Colonic mucosa (tissue), 4 donors: ENCODE measurements at regions of chr3 and their contacts with region 1.

Region 1: GRCh38 chr3:149771652-149772271 is 19.5 kb upstream of the COMMD2 start:
- DNase-seq: peak; percentile 56
- H3K4me3 ChIP-seq: no peak overlapping the region
- H3K27ac ChIP-seq: no peak overlapping the region
- H3K4me1 ChIP-seq: no peaks in the 10 kb centered on the region
- H3K27me3 ChIP-seq: no peaks in the 10 kb centered on the region
- CTCF ChIP-seq: peak; percentile 63

Region 2: DNA sequence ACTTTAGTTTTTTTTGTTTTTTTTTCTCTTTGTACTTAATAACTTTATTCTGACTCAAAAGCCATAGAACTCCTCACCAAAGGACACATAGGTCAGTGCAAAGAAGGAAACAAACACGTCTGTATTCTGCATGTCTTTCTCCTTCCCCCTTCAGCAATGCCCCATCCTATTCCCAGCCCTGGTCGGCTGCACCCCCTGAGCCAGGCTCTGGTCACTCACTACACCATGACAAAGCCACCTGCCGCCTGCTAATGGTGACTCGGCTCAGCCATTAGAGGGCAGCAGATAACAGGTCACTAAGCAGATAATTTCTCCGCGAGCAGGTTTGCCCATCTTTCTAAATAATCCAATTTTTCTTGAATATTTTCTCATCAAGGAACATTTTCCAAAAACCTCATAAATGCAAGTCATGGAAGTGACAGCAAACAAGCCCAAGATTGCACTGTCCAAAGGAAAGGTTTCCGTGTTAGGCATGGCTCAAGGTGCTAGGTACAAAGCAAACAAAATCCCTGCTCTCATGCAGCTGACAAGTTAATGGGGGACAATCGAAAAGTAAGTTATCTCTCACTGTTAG is 259.5 kb before region 1 on chr3:
- intact Hi-C with region 1: loop called (anchors 5 kb)
- DNase-seq: peak; percentile 60
- H3K4me3 ChIP-seq: no peak overlapping the region
- H3K27ac ChIP-seq: no peak overlapping the region
- H3K4me1 ChIP-seq: no peaks in the 10 kb centered on the region
- H3K27me3 ChIP-seq: no peaks in the 10 kb centered on the region
- CTCF ChIP-seq: peak; percentile 78

Region 3: DNA sequence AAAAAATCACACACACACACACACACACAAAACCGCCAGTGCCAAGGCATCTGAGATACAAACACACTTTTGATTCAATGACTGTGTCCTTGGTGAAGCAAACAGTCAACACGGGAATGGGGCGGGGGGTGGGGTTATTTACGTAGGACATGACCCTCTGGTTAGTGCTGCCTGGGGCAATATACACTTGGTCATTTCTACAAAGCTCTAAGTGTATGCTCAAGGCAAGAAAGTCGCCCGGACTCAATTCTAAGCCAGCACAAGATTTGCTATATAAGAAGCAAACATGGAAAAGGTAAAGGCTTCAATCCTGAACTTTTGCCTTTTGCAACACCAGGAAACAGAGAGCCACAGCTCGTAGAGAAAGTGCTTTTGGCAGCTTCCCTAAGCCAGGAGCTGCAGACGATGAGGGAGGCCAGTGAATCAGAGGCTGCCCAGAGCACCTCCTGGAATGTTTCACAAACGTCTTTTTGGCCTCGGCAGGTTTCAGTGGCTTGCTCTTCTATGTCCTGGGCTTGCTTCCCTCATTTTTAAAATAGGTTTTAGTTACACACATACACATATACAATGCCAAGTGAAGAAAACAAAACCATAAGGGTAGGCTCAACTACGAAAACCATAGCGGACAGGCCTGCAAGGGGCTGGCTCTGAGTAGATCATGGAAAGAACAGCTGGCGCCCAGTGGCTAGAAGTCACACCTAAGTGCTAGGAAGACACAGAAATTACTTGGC is 223.7 kb before region 1 on chr3:
- intact Hi-C with region 1: no loop called
- DNase-seq: peak; percentile 24
- H3K4me3 ChIP-seq: no peak overlapping the region
- H3K27ac ChIP-seq: peak overlapping the region; percentile 48
- H3K4me1 ChIP-seq: no peaks in the 10 kb centered on the region
- H3K27me3 ChIP-seq: no peaks in the 10 kb centered on the region
- CTCF ChIP-seq: no peak

Region 4: DNA sequence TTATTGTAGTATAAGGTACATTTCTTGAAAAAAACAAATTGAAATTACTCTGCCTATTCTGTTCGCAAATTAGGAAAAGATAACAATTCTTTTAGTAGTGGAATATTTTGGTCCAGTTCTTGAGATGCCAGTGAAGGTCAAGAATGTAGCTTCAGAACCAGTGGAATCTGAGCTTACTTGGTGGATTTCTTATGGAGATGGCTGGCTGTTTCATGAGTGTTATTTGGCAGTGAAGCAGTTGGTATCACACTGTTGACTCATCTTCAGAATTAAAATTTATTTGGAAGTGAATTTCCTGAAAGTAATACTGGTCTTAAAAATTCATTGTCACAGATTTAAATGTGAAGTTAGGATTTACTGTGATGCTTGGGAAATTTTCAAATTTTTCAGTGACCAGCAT is 60.3 kb after region 1 on chr3:
- intact Hi-C with region 1: no loop called
- DNase-seq: no peak
- H3K4me3 ChIP-seq: no peak overlapping the region
- H3K27ac ChIP-seq: no peak overlapping the region
- H3K4me1 ChIP-seq: no peaks in the 10 kb centered on the region
- H3K27me3 ChIP-seq: no peaks in the 10 kb centered on the region
- CTCF ChIP-seq: no peak